ENCODE measurements at regions of chr6 and their contacts with region 1.

Region 1: GRCh38 chr6:44257025-44257752 is at the start of gene SLC35B2:
- DNase-seq: peak in 1 of 2 donors; percentile 81
- H3K4me3 ChIP-seq: peak within 1 kb of the TSS; percentile 77 to 79
- H3K27ac ChIP-seq: peak within 1 kb of the TSS; percentile 73 to 87
- H3K4me1 ChIP-seq: peaks cover 0 to 13% of the 10 kb centered on the region in 2 donors
- H3K27me3 ChIP-seq: no peaks in the 10 kb centered on the region
- CTCF ChIP-seq: peak in 2 of 3 experiments; percentile 51 to 93
- total RNA-seq, gene SLC35B2: 9.9 TPM

Region 2: GRCh38 chr6:44237813-44238433 is 19.3 kb before region 1 on chr6:
- intact Hi-C with region 1: loop called (anchors 2 kb)
- DNase-seq: peak; percentile 72 to 93
- H3K4me3 ChIP-seq: peak overlapping the region; percentile 51 to 79
- H3K27ac ChIP-seq: peak overlapping the region; percentile 97 to 100
- H3K4me1 ChIP-seq: peaks cover 25 to 50% of the 10 kb centered on the region in 2 donors
- H3K27me3 ChIP-seq: no peaks in the 10 kb centered on the region
- CTCF ChIP-seq: peak; percentile 97 to 99 (median 98)